Mammary epithelial cell (primary cell): ENCODE measurements at regions of chr7 and their contacts with region 1.

Region 1: DNA sequence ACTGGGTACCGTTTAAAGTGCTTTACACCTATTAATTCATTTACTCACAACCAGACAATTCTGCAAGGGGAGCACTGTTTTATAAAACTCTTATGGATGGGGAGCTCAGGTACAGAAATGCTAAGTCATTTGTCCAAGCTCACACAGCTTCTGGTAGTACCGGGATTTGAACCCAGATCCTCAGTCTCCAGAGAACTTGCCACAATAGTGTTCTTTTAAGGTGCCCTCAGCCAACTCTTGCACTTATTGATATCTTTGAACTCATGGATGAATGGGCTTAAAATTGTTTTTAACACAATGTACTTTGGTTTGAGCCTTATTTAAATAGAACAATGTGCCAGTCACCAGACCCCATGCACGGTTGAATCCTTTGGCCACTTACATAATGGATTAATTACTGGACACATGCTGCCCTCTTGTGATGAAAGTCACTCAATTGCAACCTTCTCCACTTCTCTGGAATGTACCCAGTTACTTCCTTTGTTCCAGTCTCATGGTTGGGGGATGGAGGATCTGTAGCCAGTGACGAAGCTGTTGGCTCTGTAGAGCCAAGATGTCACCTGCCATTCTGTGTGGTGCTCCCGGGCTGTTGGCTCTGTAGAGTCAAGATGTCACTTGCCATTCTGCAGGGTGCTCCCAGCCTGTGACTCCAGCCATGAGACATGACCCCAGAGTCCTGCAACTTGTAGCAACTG is 65.6 kb downstream of the NOD1 start:
- DNase-seq: peak; percentile 78
- H3K4me3 ChIP-seq: no peak overlapping the region
- H3K27ac ChIP-seq: no peak overlapping the region
- H3K4me1 ChIP-seq: peaks cover 5% of the 10 kb centered on the region
- H3K27me3 ChIP-seq: no peaks in the 10 kb centered on the region
- CTCF ChIP-seq: peak; percentile 62 to 67

Region 2: DNA sequence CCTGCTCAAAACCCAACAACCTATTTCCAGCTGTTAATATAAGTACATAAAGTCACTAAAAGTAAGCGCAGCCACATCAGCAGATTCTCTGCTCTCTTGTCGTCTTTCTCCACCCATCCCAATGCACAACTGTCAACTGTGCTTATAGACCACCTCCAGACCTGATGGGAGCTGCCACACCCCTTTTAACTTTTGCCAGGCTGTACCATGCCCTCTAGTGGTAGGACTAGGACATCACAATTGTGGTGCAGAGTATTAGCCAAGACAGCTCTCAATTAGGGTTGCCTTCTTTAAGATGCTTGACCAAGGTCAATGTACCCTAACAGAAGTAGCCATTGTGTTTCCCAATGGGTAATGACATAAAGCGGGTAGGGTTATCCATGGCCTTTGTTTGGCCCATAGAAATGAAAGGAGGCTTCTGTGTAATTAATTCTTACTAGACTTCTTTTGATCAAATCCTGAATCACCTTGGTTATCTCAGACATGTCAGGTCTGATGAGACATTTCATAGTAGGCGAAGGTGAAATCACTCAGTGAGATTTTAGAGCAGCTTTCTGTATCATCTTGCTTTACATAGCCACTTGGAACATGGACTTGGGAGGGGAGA is 491.4 kb before region 1 on chr7:
- CTCF ChIA-PET with region 1: no interaction called
- dilution Hi-C with region 1: no loop called
- in situ Hi-C with region 1: no loop called
- intact Hi-C with region 1: loop called (anchors 5 kb)
- DNase-seq: peak; percentile 45
- H3K4me3 ChIP-seq: no peak overlapping the region
- H3K27ac ChIP-seq: no peak overlapping the region
- H3K4me1 ChIP-seq: no peaks in the 10 kb centered on the region
- H3K27me3 ChIP-seq: no peaks in the 10 kb centered on the region
- CTCF ChIP-seq: peak; percentile 90 to 94

Region 3: DNA sequence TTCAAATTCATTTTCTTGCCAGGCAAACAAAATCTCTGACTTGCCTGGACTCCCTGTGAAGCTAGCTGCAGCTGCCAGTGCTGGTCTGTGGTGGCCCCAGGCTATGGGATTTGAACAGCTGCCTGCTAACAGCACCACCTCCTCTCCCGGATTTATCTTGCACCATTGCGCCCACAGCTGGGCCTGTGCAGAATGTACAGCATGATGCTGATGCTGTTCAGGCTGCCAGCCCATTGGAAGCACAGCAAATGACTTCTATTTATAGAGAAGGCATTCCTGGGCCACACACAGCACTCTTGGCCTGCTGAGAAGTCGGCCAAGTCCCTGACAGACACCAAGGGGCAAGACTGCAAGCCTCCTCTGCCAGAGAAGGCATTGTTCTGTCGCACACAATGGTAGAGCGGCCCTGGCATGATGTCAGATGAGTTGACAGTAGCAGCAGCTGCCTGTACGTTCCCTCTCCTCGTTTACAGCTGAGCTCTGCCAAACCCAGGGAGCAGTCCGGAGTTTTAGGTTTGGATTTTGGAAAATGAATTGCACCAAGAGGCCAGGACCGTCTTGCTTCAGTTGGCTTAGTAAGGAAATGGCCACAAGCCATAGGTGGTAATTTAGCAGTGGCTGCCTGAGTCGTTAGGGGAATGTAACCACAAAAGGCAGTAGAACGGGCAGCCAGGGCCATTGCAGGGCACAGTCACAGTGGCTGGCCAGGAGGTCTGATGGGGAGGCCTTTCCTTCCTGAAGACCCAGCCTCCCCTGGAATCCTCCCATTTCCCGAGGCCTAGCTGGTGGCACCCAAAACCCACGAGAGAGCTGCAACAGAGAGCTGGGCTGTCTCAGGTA is 239.7 kb before region 1 on chr7:
- CTCF ChIA-PET with region 1: no interaction called
- dilution Hi-C with region 1: no loop called
- in situ Hi-C with region 1: loop called in 1 of 2 experiments (anchors 5 kb)
- intact Hi-C with region 1: no loop called
- DNase-seq: peak; percentile 99
- H3K4me3 ChIP-seq: no peak overlapping the region
- H3K27ac ChIP-seq: peak overlapping the region; percentile 91
- H3K4me1 ChIP-seq: peaks cover 51% of the 10 kb centered on the region
- H3K27me3 ChIP-seq: no peaks in the 10 kb centered on the region
- CTCF ChIP-seq: peak; percentile 50 to 84

Region 4: GRCh38 chr7:30276203-30276900 is 136.6 kb before region 1 on chr7:
- CTCF ChIA-PET with region 1: interaction called, 4 read pairs
- dilution Hi-C with region 1: no loop called
- in situ Hi-C with region 1: loop called (anchors 5 to 10 kb)
- intact Hi-C with region 1: loop called (anchors 2 kb)
- DNase-seq: peak; percentile 39
- H3K4me3 ChIP-seq: no peak overlapping the region
- H3K27ac ChIP-seq: no peak overlapping the region
- H3K4me1 ChIP-seq: no peaks in the 10 kb centered on the region
- H3K27me3 ChIP-seq: no peaks in the 10 kb centered on the region
- CTCF ChIP-seq: peak; percentile 68 to 76

Region 5: GRCh38 chr7:30459591-30460257 is 46.8 kb after region 1 on chr7:
- CTCF ChIA-PET with region 1: no interaction called
- dilution Hi-C with region 1: no loop called
- in situ Hi-C with region 1: no loop called
- intact Hi-C with region 1: no loop called
- DNase-seq: no peak
- H3K4me3 ChIP-seq: no peak overlapping the region
- H3K27ac ChIP-seq: no peak overlapping the region
- H3K4me1 ChIP-seq: no peaks in the 10 kb centered on the region
- H3K27me3 ChIP-seq: no peaks in the 10 kb centered on the region
- CTCF ChIP-seq: no peak